ENCODE measurements at regions of chr2 and their contacts with region 1.

Region 1: DNA sequence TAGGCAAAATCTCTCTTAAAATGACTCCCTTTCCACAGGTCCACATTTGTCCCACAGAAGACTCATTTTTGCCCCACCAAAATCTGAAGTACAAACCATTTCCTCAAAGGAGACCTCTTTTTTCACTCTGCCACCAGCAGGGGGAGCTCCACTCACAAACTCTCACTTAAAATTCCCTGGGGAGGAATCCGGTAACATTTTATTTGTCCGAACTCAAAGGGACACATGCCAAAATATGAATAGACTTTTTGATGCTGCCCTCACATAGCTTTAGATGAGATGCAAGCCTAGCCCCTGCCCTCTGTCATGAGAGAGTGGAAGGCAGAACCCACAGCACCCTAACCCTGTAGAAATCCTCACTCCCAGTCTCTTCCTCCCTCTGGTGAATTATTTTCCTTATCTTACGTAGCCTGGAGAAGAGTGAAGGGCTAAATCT is 57.1 kb downstream of the RMDN2 start:
- DNase-seq: peak in 4 of 5 donors; percentile 65 to 78 (median 70)
- ATAC-seq: peak in 2 of 4 donors; percentile 42 to 61
- H3K4me3 ChIP-seq: peak overlapping the region in 9 of 12 donors; percentile 21 to 48 (median 32)
- H3K27ac ChIP-seq: no peak overlapping the region
- H3K4me1 ChIP-seq: peaks cover 0 to 8% (median 0%) of the 10 kb centered on the region in 12 donors
- H3K27me3 ChIP-seq: no peaks in the 10 kb centered on the region
- CTCF ChIP-seq: peak; percentile 80 to 91 (median 84)
- POLR2A ChIP-seq: no peak

Region 2: GRCh38 chr2:37934591-37935513 is 47.3 kb before region 1 on chr2:
- intact Hi-C with region 1: no loop called
- DNase-seq: no peak
- ATAC-seq: no peak
- H3K4me3 ChIP-seq: peak overlapping the region in 6 of 12 donors; percentile 5 to 35 (median 13)
- H3K27ac ChIP-seq: peak overlapping the region in 1 of 12 donors; percentile 22
- H3K4me1 ChIP-seq: peaks cover 0 to 21% (median 0%) of the 10 kb centered on the region in 12 donors
- H3K27me3 ChIP-seq: no peaks in the 10 kb centered on the region
- CTCF ChIP-seq: no peak
- POLR2A ChIP-seq: no peak

Region 3: DNA sequence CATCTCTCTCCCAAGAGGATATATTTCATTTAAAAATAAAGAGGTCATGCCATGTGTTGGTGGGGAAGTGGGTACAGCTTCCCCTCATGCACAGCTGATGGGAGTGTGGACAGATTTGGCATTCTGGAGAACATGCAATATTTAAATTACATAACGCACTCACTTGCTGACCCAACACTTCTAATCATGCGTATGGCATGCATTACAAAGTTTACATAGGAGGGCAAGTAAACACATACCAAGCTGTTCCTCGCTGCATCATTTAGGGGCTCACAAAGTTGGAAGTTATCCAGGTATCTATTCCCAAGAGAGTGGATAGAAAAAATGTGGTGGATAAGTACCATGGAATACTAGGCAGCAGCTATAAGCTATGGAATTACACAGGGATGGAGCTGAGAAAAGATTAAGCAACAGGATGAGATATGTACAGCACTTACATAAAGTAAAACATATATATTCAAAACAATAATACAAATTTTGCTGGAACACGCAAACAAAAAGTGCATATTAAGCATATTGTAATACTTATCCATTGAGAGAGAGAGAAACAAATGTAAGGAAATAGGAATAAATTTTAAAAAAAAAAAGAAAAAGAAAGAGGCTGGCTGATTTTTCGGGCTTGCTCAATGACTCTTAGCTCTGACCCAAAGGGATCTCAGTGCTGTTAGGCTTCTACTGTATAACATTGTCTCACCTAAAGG is 82.8 kb after region 1 on chr2:
- intact Hi-C with region 1: loop called in 1 of 10 experiments (anchors 10 kb)
- DNase-seq: no peak
- ATAC-seq: peak in 1 of 4 donors; percentile 13
- H3K4me3 ChIP-seq: no peak overlapping the region
- H3K27ac ChIP-seq: no peak overlapping the region
- H3K4me1 ChIP-seq: peaks cover 0 to 12% (median 0%) of the 10 kb centered on the region in 12 donors
- H3K27me3 ChIP-seq: no peaks in the 10 kb centered on the region
- CTCF ChIP-seq: no peak
- POLR2A ChIP-seq: no peak

Region 4: GRCh38 chr2:38076606-38077430 is 94.7 kb after region 1 on chr2:
- intact Hi-C with region 1: loop called in 2 of 10 experiments (anchors 2 to 5 kb)
- DNase-seq: peak; percentile 81 to 89 (median 83)
- ATAC-seq: peak; percentile 33 to 79 (median 72)
- H3K4me3 ChIP-seq: peak overlapping the region; percentile 30 to 77 (median 65)
- H3K27ac ChIP-seq: peak overlapping the region; percentile 78 to 97 (median 93)
- H3K4me1 ChIP-seq: peaks cover 0 to 52% (median 22%) of the 10 kb centered on the region in 12 donors
- H3K27me3 ChIP-seq: peaks cover 0 to 55% (median 32%) of the 10 kb centered on the region in 9 donors
- CTCF ChIP-seq: peak; percentile 17 to 60 (median 34)
- POLR2A ChIP-seq: peak in 1 of 2 donors; percentile 69

Measured in heart left ventricle (tissue), 16 donors.